Activated B cell treated with CpG ODN at 0.5 μM for 24 hours (primary cell): ENCODE measurements at regions of chr3 and their contacts with region 1.

Region 1: GRCh38 chr3:45240292-45240691 is 14.2 kb upstream of the TMEM158 start:
- DNase-seq: no peak
- ATAC-seq: no peak
- H3K4me3 Mint-ChIP-seq: no peak overlapping the region
- H3K27ac Mint-ChIP-seq: no peak overlapping the region
- H3K4me1 Mint-ChIP-seq: no peaks in the 10 kb centered on the region
- H3K27me3 Mint-ChIP-seq: peaks cover 24% of the 10 kb centered on the region
- CTCF ChIP-seq: no peak

Region 2: DNA sequence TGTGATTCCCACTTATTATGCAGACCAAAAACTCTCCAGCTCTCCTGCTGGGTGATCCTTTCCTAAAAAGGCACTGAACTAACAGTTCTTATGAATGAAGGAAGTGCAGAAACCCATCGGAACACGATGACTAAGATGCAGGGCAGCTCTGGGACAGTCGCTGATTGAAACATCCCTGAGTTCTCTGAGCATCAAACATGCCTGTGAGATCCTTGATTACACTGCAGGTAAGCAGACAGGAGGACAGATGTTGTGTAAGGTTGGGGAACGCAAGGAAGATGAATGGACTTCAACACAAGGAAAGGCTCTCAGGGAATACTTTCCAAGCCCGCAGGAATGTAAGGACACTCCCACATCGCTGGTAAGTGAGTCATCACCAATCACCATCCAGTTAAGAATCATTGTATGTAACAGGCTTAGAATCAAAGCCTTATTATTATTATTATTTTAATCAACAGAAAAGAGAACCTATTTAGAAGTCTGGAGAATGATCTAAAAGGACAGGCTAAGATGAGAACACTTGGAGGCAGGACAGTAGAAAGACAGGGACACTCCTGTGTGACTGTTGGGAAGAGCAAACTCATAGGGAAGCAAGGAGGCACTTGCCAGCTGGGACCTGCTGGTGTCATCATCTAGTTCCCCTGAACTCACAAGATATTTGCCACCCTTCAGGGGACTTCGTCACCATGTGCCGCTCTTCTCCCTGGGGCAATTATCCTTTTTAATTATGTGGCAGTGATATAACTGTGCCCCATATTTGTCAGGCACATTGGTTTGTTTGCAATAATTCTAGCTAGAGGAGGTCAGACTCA is 40.2 kb before region 1 on chr3:
- CTCF ChIA-PET with region 1: no interaction called
- POLR2A ChIA-PET with region 1: no interaction called
- intact Hi-C with region 1: no loop called
- DNase-seq: no peak
- ATAC-seq: no peak
- H3K4me3 Mint-ChIP-seq: no peak overlapping the region
- H3K27ac Mint-ChIP-seq: no peak overlapping the region
- H3K4me1 Mint-ChIP-seq: no peaks in the 10 kb centered on the region
- H3K27me3 Mint-ChIP-seq: peaks cover 22% of the 10 kb centered on the region
- CTCF ChIP-seq: no peak

Region 3: DNA sequence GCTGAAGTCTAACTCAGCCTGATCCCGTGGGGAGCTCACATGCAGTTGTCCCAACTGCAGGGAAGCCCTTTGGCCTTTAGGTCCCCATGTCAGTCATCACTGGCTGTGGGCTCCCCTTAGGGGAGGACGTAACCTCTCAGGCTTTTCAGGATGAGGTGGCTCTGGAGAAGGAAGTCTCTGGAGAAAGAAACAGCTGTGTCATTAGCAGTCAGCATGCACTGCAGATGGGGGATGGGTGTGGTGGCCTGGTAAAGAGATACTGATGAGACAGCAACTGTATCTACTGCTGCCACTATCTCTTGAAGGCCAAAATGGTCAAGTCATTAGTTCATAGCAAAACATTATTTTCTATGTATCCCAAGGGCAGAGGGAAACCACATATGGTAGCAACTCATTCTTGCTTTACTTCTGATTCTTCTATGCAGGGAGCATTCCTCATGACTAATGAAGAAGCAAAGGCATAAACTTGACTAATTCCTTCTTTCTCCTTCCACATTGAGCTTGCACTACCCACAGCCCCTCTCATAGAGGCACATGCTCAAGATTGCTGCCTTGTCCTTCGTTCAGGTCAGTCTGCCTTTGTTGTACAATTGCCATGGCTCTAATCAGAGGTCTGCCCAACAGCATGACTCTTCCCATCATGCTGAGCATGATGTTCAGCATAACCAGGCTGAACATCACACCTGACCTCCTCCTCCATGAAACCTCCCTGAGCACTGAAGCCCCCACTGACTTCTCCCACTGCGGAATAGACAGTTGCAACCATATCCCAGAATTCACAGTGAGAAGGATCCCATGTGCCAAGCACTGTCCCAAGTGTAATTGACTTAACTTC is 33.6 kb after region 1 on chr3:
- CTCF ChIA-PET with region 1: no interaction called
- POLR2A ChIA-PET with region 1: no interaction called
- intact Hi-C with region 1: loop called (anchors 1 kb)
- DNase-seq: no peak
- ATAC-seq: no peak
- H3K4me3 Mint-ChIP-seq: no peak overlapping the region
- H3K27ac Mint-ChIP-seq: no peak overlapping the region
- H3K4me1 Mint-ChIP-seq: no peaks in the 10 kb centered on the region
- H3K27me3 Mint-ChIP-seq: peaks cover 36% of the 10 kb centered on the region
- CTCF ChIP-seq: no peak

Region 4: GRCh38 chr3:45343947-45344346 is 103.7 kb after region 1 on chr3:
- CTCF ChIA-PET with region 1: no interaction called
- POLR2A ChIA-PET with region 1: no interaction called
- intact Hi-C with region 1: no loop called
- DNase-seq: no peak
- ATAC-seq: no peak
- H3K4me3 Mint-ChIP-seq: no peak overlapping the region
- H3K27ac Mint-ChIP-seq: no peak overlapping the region
- H3K4me1 Mint-ChIP-seq: no peaks in the 10 kb centered on the region
- H3K27me3 Mint-ChIP-seq: peaks cover 2% of the 10 kb centered on the region
- CTCF ChIP-seq: no peak